ENCODE measurements at regions of chr14 and their contacts with region 1.

Region 1: DNA sequence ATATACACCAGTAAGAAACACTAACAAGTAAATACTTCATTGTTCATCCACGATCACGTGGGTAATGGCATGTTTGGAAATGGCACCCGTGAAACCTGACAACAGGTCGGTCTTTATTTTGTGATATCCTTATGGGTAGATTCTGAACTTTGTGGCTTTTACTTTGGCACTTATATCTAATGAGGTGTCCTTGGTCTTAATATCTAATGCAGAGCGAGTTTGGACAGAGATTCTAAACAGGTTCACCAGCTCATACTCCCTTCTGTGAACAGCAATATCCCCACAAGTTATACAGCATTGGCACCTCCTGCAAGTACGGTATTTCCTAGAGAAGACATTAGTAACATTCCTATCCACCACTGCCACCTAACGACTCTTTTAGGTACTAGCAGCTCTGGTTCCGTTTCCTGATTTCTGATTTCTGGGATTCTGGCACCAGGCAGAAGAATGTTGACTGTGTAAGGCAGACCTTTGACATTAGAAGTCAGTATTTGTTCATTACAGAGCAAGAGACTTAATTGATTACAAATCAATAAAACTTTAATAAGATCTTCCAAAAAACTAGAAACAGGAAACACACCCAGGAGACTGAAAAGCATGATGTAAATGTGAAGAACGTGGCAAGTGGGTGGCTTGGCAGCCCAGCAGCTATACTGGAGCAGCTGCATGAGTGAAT is 2.4 kb downstream of the ANG start:
- DNase-seq: peak; percentile 36
- H3K4me3 Mint-ChIP-seq: no peak overlapping the region
- H3K27ac Mint-ChIP-seq: no peak overlapping the region
- H3K4me1 Mint-ChIP-seq: peaks cover 13% of the 10 kb centered on the region
- H3K27me3 Mint-ChIP-seq: no peaks in the 10 kb centered on the region

Region 2: DNA sequence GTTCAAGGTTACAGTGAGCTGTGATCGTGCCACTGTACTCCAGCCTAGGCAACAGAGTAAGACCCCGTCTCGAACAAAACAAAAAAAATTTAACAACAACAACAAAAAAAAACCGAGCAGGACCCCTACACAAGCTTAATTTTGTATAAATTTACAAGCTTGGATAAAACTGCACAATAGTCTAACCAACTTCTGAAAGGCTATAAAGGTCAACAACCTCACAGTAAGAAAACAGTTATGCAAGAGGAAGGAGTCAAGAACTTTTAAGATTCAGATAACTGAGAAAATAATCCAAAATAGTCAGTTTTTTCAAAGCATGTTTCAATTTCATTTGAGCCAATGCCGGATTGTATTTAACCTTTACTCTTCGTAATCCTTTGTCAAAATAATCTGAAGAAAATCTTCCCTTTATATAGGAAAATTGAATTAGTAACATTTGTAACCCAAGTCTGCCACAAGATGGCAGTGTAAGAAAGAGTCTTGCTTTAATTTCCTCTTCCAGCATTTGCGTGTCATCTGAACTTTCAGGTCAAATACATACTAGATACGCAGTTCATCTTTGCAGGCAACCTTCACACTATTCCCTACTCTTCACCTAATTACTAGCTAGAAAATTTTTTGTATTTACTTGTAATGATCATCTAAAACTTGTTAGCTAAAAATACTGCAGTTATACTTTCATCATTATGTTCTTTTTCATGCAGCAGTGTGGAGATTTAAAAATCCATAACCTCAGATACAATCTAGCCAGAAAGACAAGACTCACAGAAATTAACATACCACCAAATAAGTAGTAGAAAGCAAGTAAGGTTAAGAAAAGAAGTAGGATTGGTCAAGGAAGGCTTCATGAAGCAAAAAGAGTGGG is 363.7 kb before region 1 on chr14:
- CTCF ChIA-PET with region 1: interaction called, 11 read pairs
- POLR2A ChIA-PET with region 1: no interaction called
- intact Hi-C with region 1: no loop called
- DNase-seq: no peak
- H3K4me3 Mint-ChIP-seq: peak overlapping the region; percentile 0
- H3K27ac Mint-ChIP-seq: peak overlapping the region; percentile 43
- H3K4me1 Mint-ChIP-seq: peaks cover 40% of the 10 kb centered on the region
- H3K27me3 Mint-ChIP-seq: no peaks in the 10 kb centered on the region

Region 3: DNA sequence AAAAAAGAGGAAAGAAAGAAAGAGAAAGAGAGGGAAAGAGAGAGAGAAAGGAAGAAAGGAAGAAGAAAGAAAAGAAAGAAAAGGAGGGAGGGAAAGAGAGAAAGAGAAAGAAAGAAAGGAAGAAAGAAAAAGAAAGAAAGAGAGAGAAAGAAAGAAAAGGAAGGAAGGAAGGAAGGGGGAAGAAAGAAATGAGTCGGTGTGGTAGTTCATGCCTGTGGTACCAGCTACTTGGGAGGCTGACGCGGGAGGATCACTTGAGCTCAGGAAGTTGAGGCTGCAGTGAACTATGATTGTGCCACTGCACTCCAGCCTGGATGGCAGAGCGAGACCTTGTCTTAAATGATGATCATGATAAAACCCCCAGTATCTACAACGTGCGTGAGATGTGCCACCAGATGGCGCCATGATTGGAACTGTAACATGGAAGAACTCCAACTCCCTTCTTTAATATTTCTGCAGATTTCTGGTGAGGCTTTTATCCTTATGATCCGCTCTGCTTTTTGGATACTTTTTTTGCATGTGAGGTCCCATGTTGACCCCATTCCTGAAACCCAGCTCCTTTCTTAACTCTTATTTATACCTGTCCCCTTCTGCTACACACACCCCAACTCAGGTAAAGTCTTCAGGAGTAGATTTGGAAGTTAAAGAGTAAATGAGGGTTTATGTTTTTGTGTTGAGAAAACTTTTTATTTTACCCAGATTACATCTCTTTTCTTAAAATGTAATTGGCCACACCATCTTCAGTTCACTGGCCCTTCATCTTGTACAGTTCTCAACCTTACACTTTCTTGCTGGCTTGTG is 160.0 kb before region 1 on chr14:
- CTCF ChIA-PET with region 1: interaction called, 4 read pairs
- POLR2A ChIA-PET with region 1: no interaction called
- intact Hi-C with region 1: loop called (anchors 2 kb)
- DNase-seq: peak; percentile 82
- H3K4me3 Mint-ChIP-seq: peak overlapping the region; percentile 47
- H3K27ac Mint-ChIP-seq: no peak overlapping the region
- H3K4me1 Mint-ChIP-seq: peaks cover 8% of the 10 kb centered on the region
- H3K27me3 Mint-ChIP-seq: peaks cover 2% of the 10 kb centered on the region

Region 4: DNA sequence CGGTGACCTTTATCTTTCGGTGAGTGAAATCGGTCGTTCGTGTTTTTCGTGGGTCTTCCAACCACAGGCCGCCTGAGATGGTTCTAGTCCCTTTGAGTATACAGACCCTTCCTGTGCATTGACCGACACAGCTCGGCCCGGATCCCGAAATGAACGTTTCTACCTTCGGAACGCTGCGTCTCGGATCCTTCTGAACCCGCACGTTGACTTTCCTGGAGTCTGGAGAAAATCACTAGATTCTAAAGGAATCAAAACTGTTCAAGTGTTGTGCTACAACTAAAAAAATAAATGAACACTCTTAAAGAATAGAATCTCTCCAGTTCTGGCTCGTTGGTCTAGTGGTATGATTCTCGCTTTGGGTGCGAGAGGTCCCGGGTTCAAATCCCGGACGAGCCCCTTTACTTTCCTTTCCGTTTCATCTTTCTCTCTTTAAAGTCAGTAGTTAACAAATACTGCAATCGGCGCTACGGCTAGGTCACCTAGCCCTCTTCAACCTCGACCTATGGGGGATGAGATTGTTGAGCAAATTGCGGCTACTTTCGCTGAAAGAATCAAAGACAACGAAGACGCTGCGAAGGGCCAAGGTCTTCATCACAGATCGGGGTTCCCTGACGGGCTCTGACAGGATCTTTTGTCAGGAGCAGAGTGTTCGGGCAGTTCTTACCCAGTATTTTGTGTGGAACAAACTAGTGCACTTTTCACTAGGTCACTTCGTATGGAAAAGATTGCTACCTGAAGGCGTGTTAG is 58.1 kb before region 1 on chr14:
- CTCF ChIA-PET with region 1: interaction called, 10 read pairs
- POLR2A ChIA-PET with region 1: no interaction called
- intact Hi-C with region 1: no loop called
- DNase-seq: peak; percentile 81
- H3K4me3 Mint-ChIP-seq: peak overlapping the region; percentile 76
- H3K27ac Mint-ChIP-seq: peak overlapping the region; percentile 87
- H3K4me1 Mint-ChIP-seq: peaks cover 42% of the 10 kb centered on the region
- H3K27me3 Mint-ChIP-seq: peaks cover 38% of the 10 kb centered on the region

Region 5: DNA sequence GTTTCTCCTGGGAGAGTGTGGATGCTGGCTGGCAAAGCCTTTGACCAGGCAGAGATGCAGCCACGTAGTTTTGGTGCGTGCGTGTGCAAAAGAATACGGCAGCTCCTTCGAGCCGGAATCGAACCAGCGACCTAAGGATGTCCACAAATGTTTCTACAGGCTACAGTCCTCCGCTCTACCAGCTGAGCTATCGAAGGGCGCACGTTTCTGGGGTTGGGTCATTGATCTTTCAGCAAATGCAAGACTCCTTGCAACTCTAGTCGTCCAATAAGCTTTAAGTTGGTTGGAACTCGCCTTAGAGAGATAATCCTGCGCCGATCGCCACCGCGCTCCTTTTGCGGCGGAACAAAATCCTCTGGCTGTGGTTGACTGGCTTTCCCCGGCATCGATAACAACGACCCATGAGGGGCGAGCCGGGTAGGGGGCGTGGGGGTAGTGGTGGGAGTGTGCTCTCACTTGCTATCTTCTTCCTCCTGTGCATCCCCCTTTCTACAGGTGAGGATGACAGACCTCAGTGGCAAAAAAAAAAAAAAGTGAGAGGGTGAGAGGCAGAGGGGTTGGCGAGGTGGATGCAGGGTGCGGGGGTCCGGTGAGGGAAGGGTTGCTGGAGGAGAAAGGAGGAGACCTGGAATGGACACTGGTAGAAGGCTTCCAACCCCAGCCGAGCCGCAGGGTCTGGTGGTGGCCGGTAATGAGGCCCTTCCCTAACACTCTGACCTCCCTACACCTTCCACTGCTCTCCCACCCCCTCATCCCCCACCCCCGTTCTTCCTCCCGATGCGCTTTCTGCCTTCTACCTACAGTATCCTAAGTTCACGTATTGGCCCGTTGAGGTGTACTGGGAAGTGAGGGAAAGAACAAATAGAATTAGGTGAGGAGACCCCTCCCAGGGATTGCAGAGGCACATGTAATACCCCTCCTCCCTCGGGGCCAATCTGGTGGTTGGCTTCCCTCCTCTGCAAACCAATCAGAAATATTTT is 37.7 kb before region 1 on chr14:
- CTCF ChIA-PET with region 1: interaction called, 129 read pairs
- POLR2A ChIA-PET with region 1: interaction called, 3 read pairs
- intact Hi-C with region 1: no loop called
- DNase-seq: peak; percentile 85
- H3K4me3 Mint-ChIP-seq: peak overlapping the region; percentile 63
- H3K27ac Mint-ChIP-seq: no peak overlapping the region
- H3K4me1 Mint-ChIP-seq: peaks cover 22% of the 10 kb centered on the region
- H3K27me3 Mint-ChIP-seq: peaks cover 53% of the 10 kb centered on the region

Region 6: GRCh38 chr14:20662968-20663732 is 27.8 kb before region 1 on chr14:
- CTCF ChIA-PET with region 1: interaction called, 129 read pairs
- POLR2A ChIA-PET with region 1: interaction called, 3 read pairs
- intact Hi-C with region 1: loop called (anchors 1 kb)
- DNase-seq: peak; percentile 93
- H3K4me3 Mint-ChIP-seq: peak overlapping the region; percentile 74
- H3K27ac Mint-ChIP-seq: peak overlapping the region; percentile 62
- H3K4me1 Mint-ChIP-seq: peaks cover 25% of the 10 kb centered on the region
- H3K27me3 Mint-ChIP-seq: peaks cover under 1% of the 10 kb centered on the region

Region 7: DNA sequence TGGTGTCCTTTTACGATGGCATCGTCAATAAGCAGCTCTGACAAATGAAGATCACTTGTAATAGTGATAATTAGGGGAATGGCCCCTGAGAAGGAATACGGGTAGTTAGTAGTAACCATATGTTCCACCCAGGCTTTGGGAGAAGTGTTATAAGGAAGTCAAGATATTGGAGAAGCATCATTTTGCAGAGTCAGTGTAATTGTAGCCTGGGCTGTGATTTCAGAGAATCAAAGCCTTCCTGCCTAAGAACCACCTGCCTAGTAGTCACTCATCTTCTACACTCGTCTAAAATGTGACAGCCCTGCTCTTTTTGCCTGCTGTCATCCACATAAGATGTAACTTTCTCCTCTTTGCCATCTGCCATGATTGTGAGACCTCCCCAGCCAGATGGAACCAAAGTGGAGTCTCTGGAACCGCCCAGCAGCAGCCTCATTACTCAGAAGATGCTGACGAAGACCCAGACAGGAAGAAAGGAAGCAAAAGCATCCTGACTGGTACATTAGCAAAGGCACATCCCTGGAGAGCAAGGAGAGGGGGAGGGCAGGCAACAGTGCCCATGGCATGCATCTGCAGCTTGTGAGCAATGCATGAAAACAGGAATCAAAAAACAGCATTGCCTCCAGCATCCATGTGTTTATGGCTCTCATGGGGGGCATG is 42.1 kb after region 1 on chr14:
- CTCF ChIA-PET with region 1: no interaction called
- POLR2A ChIA-PET with region 1: no interaction called
- intact Hi-C with region 1: no loop called
- DNase-seq: no peak
- H3K4me3 Mint-ChIP-seq: no peak overlapping the region
- H3K27ac Mint-ChIP-seq: no peak overlapping the region
- H3K4me1 Mint-ChIP-seq: no peaks in the 10 kb centered on the region
- H3K27me3 Mint-ChIP-seq: peaks cover 2% of the 10 kb centered on the region

Region 8: GRCh38 chr14:20774338-20774737 is 83.4 kb after region 1 on chr14:
- CTCF ChIA-PET with region 1: no interaction called
- POLR2A ChIA-PET with region 1: no interaction called
- intact Hi-C with region 1: no loop called
- DNase-seq: no peak
- H3K4me3 Mint-ChIP-seq: no peak overlapping the region
- H3K27ac Mint-ChIP-seq: no peak overlapping the region
- H3K4me1 Mint-ChIP-seq: no peaks in the 10 kb centered on the region
- H3K27me3 Mint-ChIP-seq: peaks cover under 1% of the 10 kb centered on the region

Region 9: DNA sequence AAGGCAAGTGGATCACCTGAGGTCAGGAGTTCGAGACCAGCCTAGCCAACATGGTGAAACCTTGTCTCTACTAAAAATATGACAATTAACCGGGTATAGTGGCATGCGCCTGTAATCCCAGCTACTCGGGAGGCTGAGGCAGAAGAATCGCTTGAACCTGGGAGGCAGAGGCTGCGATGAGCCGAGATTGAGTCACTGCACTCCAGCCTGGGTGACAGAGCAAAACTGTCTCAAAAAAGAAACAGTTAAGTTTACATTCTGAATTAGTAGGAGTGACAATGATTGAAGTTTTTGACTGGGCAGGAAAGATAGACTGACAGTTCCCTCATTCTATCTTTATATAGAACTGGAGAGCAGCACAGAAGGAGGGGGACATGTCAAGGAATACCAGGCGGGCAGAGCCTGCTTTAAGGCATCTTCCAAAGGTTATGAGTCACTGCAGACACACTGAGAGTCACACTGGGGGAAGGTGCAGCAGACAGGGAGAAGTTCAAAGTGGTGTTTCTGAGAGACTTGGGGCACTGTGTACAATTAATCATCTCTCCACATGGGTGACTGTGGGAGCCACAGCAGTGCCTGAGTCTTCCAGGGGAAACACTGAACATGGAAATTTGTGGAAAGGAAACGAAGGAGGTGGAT is 157.4 kb after region 1 on chr14:
- CTCF ChIA-PET with region 1: no interaction called
- POLR2A ChIA-PET with region 1: no interaction called
- intact Hi-C with region 1: no loop called
- DNase-seq: no peak
- H3K4me3 Mint-ChIP-seq: no peak overlapping the region
- H3K27ac Mint-ChIP-seq: no peak overlapping the region
- H3K4me1 Mint-ChIP-seq: no peaks in the 10 kb centered on the region
- H3K27me3 Mint-ChIP-seq: peaks cover 4% of the 10 kb centered on the region

Region 10: DNA sequence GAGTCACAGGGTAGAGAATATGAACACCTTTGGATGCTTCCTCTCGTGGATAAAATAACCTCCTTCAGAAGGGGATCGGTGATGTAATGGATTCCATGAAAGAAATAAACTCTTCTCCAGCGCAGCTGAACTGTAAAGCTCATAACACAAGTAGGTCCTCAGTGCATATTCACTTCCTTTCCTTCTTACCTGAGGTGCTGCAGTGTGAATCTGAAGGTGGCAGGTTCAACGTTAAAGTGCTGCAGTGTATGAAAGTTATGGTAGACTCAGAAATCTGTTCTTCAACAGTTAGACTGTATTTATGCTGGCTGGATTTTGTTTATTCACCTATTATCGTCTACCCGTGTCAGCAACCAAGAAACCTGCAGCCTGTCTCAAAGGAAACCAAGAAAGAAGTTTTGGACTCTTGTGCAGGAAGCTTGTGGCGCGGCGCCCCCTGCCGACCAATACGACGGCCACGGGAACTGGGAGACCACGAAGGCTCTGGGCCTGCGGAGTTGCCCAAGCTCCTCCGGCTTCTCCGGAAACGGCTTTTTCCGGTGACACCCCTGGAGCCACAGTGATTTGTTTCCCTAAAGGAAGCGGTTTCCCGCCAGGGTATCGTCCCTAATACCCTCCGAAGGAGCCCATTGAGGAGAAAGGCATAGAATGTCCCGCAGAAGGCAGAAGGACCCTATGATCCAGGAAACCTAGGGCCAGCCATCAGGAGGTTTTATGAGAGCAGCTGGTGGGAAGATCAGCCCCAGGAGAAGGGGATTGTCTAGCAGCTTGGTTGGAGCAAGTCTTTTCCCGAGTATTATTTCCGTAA is 182.6 kb after region 1 on chr14:
- CTCF ChIA-PET with region 1: interaction called, 14 read pairs
- POLR2A ChIA-PET with region 1: no interaction called
- intact Hi-C with region 1: no loop called
- DNase-seq: peak; percentile 91
- H3K4me3 Mint-ChIP-seq: peak overlapping the region; percentile 13
- H3K27ac Mint-ChIP-seq: no peak overlapping the region
- H3K4me1 Mint-ChIP-seq: peaks cover 15% of the 10 kb centered on the region
- H3K27me3 Mint-ChIP-seq: no peaks in the 10 kb centered on the region

Measured in activated CD4-positive, alpha-beta memory T cell treated with anti-CD3 and anti-CD28 coated beads for 36 hours (primary cell).